Mammary epithelial cell (primary cell): ENCODE measurements at regions of chr2 and their contacts with region 1.

Region 1: DNA sequence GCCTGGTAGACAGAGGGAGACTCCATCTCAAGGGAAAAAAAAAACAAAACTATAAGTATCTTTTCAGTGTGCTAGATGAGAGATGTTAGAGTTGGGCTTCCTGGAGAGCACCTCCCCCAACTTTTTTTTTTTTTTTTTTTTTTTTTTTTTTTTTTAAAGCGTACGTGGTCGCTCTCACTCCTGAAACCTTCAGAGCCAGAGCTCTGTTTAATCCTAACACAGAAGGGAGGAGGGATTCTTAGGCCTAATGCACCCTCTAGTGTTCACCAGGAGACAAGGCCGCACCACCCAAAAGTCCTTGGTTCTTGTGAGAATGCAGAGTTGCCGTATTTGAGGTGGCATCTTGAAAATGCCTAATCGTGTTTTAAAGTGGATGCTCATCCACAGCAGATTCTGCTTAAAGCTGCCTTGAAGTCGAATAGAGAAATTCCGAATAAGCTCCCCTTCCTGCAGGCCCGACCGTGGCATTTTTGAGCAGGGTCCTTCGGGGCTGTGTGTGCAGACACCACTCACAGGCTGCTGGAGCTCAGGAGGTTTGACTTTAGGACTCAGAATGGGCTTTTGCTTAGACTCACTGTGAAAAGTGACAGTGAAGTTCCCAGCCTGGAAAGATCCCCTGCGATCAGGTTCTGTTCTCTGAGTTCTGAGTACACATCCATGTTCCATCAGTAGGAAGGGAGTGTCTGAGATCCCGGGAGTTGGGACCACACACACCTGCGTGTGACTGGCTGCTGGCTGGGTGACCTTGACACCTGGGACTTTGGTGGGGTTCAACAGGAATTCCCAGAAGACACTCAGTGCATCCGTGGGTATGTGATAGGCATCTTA is 252.6 kb downstream of the AGAP1 start:
- DNase-seq: peak; percentile 66
- H3K4me3 ChIP-seq: no peak overlapping the region
- H3K27ac ChIP-seq: no peak overlapping the region
- H3K4me1 ChIP-seq: peaks cover 18% of the 10 kb centered on the region
- H3K27me3 ChIP-seq: no peaks in the 10 kb centered on the region
- CTCF ChIP-seq: peak; percentile 60 to 81

Region 2: DNA sequence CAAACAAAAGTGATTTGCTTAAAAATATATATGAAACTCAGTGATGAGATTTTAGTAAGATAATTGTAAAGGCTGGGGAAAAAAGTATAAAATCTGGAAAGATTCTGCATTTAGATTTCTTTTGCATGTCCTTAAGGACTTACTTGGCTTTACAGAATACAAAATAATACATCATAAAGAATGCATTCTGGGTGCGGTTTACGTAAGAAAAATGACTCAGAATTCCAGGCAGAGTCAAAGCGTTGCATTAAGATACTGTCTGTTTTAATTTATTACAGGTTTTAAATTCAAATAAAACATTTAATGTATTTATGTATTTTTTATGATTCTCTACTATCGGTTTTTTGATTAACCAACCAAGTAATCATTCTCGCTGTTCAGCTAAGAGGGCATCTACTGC is 616.6 kb before region 1 on chr2:
- CTCF ChIA-PET with region 1: interaction called, 4 read pairs
- dilution Hi-C with region 1: no loop called
- in situ Hi-C with region 1: loop called (anchors 5 to 10 kb)
- intact Hi-C with region 1: no loop called
- DNase-seq: no peak
- H3K4me3 ChIP-seq: no peak overlapping the region
- H3K27ac ChIP-seq: no peak overlapping the region
- H3K4me1 ChIP-seq: no peaks in the 10 kb centered on the region
- H3K27me3 ChIP-seq: no peaks in the 10 kb centered on the region
- CTCF ChIP-seq: no peak

Region 3: GRCh38 chr2:235135990-235136561 is 610.4 kb before region 1 on chr2:
- CTCF ChIA-PET with region 1: interaction called, 4 read pairs
- dilution Hi-C with region 1: no loop called
- in situ Hi-C with region 1: loop called (anchors 5 to 10 kb)
- intact Hi-C with region 1: loop called (anchors 1 kb)
- DNase-seq: peak; percentile 40
- H3K4me3 ChIP-seq: no peak overlapping the region
- H3K27ac ChIP-seq: no peak overlapping the region
- H3K4me1 ChIP-seq: no peaks in the 10 kb centered on the region
- H3K27me3 ChIP-seq: no peaks in the 10 kb centered on the region
- CTCF ChIP-seq: peak; percentile 82 to 91

Region 4: DNA sequence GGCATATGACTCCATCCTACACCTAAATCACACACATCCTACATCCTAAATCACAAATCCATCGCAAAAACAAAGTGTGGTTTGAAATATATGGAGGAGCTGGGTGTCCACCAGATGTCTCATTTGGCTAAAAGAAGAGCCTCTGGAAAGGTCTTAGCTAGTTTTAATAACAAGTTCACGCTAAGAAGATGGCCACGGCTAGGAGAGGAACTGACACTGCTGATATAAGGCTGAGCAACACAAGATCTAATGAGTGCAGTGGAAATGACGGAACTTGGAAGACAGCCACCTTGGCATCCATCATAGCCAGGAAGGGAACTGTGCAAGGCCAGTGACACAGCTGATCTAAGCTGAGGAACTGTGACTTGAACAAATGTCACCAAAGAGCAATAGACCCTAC is 312.6 kb before region 1 on chr2:
- CTCF ChIA-PET with region 1: no interaction called
- dilution Hi-C with region 1: no loop called
- in situ Hi-C with region 1: no loop called
- intact Hi-C with region 1: loop called (anchors 10 kb)
- DNase-seq: no peak
- H3K4me3 ChIP-seq: no peak overlapping the region
- H3K27ac ChIP-seq: no peak overlapping the region
- H3K4me1 ChIP-seq: no peaks in the 10 kb centered on the region
- H3K27me3 ChIP-seq: peaks cover 3% of the 10 kb centered on the region
- CTCF ChIP-seq: no peak

Region 5: GRCh38 chr2:235493775-235494715 is 252.4 kb before region 1 on chr2 and contains the start of gene AGAP1:
- CTCF ChIA-PET with region 1: no interaction called
- dilution Hi-C with region 1: no loop called
- in situ Hi-C with region 1: no loop called
- intact Hi-C with region 1: loop called (anchors 5 kb)
- DNase-seq: peak; percentile 76
- H3K4me3 ChIP-seq: peak within 1 kb of the TSS; percentile 62 to 80 (median 67)
- H3K27ac ChIP-seq: peak within 1 kb of the TSS; percentile 46
- H3K4me1 ChIP-seq: peaks cover 14% of the 10 kb centered on the region
- H3K27me3 ChIP-seq: no peaks in the 10 kb centered on the region
- CTCF ChIP-seq: no peak
- total RNA-seq, gene AGAP1: 11.2 to 28.9 TPM

Region 6: DNA sequence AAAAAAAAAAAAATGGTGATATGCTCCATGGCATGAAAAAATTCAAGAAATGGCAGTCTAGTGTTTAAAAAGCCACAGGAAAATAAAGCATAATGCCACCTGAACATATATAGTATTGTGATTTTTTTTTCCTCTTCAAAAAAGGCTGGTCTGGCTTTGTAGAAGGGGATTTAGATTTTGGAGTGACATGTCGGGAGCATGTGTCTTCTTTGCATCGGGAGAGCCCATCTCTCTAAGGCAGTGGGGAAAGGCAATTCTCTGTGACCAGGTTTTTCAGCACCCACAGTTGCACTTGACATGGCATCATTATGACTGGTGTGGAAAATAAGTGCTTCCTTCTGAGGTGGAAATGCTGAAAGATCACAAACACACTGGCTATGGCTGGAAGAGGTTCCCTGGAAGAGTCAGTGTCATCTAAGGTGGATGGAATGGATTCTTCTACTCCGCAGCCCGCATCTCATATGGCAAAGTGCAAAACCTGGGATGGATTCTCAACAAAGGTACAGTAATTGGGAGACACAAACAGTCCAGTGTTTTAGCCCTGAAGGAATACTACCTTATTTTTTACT is 80.2 kb before region 1 on chr2:
- CTCF ChIA-PET with region 1: no interaction called
- dilution Hi-C with region 1: no loop called
- in situ Hi-C with region 1: no loop called
- intact Hi-C with region 1: loop called (anchors 2 kb)
- DNase-seq: peak; percentile 92
- H3K4me3 ChIP-seq: peak overlapping the region; percentile 46 to 51 (median 50)
- H3K27ac ChIP-seq: peak overlapping the region; percentile 55
- H3K4me1 ChIP-seq: peaks cover 23% of the 10 kb centered on the region
- H3K27me3 ChIP-seq: no peaks in the 10 kb centered on the region
- CTCF ChIP-seq: no peak

Region 7: GRCh38 chr2:235709124-235709813 is 37.2 kb before region 1 on chr2:
- CTCF ChIA-PET with region 1: interaction called, 11 read pairs
- dilution Hi-C with region 1: no loop called
- in situ Hi-C with region 1: no loop called
- intact Hi-C with region 1: no loop called
- DNase-seq: peak; percentile 89
- H3K4me3 ChIP-seq: no peak overlapping the region
- H3K27ac ChIP-seq: peak overlapping the region; percentile 85
- H3K4me1 ChIP-seq: peaks cover 29% of the 10 kb centered on the region
- H3K27me3 ChIP-seq: no peaks in the 10 kb centered on the region
- CTCF ChIP-seq: no peak